Naive thymus-derived CD4-positive, alpha-beta T cell (primary cell): ENCODE measurements at regions of chr19 and their contacts with region 1.

Region 1: GRCh38 chr19:20039203-20039723 is at the start of gene ZNF682:
- DNase-seq: peak; percentile 83 to 96 (median 94)
- ATAC-seq: peak; percentile 100
- H3K4me3 ChIP-seq: peak within 1 kb of the TSS; percentile 90
- H3K4me3 Mint-ChIP-seq: peak within 1 kb of the TSS; percentile 92 to 99 (median 96)
- H3K27ac ChIP-seq: peak within 1 kb of the TSS; percentile 81
- H3K27ac Mint-ChIP-seq: peak within 1 kb of the TSS; percentile 86 to 98 (median 94)
- H3K4me1 ChIP-seq: no peaks in the 10 kb centered on the region
- H3K4me1 Mint-ChIP-seq: peaks cover 5 to 27% (median 25%) of the 10 kb centered on the region in 7 donors
- H3K27me3 ChIP-seq: no peaks in the 10 kb centered on the region
- H3K27me3 Mint-ChIP-seq: peaks cover 0 to 5% (median 0%) of the 10 kb centered on the region in 5 donors
- total RNA-seq, gene ZNF682: 5.3 to 13.0 (median 9.5) TPM

Region 2: DNA sequence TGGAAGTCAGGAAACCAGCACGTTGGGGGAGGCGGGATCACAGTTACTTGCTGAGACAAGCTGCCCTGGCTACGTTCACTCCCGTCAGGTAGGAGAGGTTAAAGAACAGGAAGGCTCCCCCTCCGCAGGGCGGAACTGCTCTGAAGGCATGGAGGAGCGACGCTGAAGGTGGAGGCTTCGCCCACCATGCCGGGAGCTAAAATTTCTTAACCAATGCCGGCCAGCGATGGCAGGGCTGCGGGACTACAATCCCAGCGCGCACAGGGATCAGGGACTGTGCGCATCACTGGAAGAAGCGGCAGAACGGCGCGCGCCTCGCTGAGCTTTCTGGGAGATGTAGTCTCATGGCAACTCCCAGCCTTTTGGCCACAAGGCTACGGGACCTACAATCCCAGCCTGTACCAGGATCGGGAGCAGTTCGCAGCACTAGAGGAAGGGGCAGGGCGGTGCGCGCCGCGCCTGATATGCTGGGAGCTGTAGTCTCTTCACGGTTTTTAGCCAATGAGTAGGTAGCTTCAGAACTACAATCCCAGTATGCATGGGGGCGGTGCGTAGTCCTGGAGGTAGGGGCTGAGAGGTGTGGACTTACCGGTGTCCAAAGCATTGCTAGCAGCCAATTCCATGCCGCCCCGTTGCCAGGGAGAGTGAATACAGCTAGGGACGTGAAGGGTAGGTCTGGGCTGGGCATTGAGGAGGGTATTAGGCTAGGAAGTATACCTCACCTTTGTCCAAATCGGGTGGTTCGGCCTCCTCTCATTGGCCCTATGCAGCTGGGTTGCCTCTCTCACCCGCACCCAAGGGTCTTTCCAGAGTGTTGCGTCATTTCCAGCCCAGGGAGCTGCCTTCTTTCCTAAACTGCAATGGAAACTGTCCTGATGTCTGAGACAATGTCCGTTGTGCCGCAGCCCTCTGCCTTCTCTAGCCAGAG is 12.8 kb after region 1 on chr19:
- CTCF ChIA-PET with region 1: no interaction called
- POLR2A ChIA-PET with region 1: interaction called, 32 read pairs
- intact Hi-C with region 1: loop called (anchors 1 to 2 kb)
- DNase-seq: peak; percentile 17 to 50 (median 44)
- ATAC-seq: peak; percentile 93
- H3K4me3 ChIP-seq: peak overlapping the region; percentile 98
- H3K4me3 Mint-ChIP-seq: peak overlapping the region; percentile 95 to 100 (median 98)
- H3K27ac ChIP-seq: peak overlapping the region; percentile 77
- H3K27ac Mint-ChIP-seq: peak overlapping the region; percentile 83 to 97 (median 94)
- H3K4me1 ChIP-seq: peaks cover 8% of the 10 kb centered on the region in 2 donors
- H3K4me1 Mint-ChIP-seq: peaks cover 0 to 17% (median 8%) of the 10 kb centered on the region in 7 donors
- H3K27me3 ChIP-seq: no peaks in the 10 kb centered on the region
- H3K27me3 Mint-ChIP-seq: peaks cover 0 to 4% (median 0%) of the 10 kb centered on the region in 5 donors

Region 3: GRCh38 chr19:20077791-20078463 is 38.7 kb after region 1 on chr19 and contains the start of gene ZNF90:
- CTCF ChIA-PET with region 1: no interaction called
- POLR2A ChIA-PET with region 1: interaction called, 10 read pairs
- intact Hi-C with region 1: loop called in 1 of 2 experiments (anchors 1 kb)
- DNase-seq: peak; percentile 57 to 90 (median 84)
- ATAC-seq: peak; percentile 99
- H3K4me3 ChIP-seq: peak within 1 kb of the TSS; percentile 86
- H3K4me3 Mint-ChIP-seq: peak within 1 kb of the TSS; percentile 86 to 89 (median 88)
- H3K27ac ChIP-seq: no peak within 1 kb of the TSS
- H3K27ac Mint-ChIP-seq: peak within 1 kb of the TSS; percentile 31 to 82 (median 54)
- H3K4me1 ChIP-seq: peaks cover 4 to 8% of the 10 kb centered on the region in 2 donors
- H3K4me1 Mint-ChIP-seq: peaks cover 0 to 27% (median 14%) of the 10 kb centered on the region in 7 donors
- H3K27me3 ChIP-seq: no peaks in the 10 kb centered on the region
- H3K27me3 Mint-ChIP-seq: no peaks in the 10 kb centered on the region
- total RNA-seq, gene ZNF90: 3.4 to 7.7 (median 4.5) TPM

Region 4: GRCh38 chr19:20237761-20238623 is 198.7 kb after region 1 on chr19:
- CTCF ChIA-PET with region 1: no interaction called
- POLR2A ChIA-PET with region 1: no interaction called
- intact Hi-C with region 1: loop called in 1 of 2 experiments (anchors 2 kb)
- DNase-seq: peak; percentile 70 to 90 (median 83)
- ATAC-seq: peak; percentile 97
- H3K4me3 ChIP-seq: peak overlapping the region; percentile 71
- H3K4me3 Mint-ChIP-seq: peak overlapping the region; percentile 83 to 98 (median 96)
- H3K27ac ChIP-seq: peak overlapping the region; percentile 63
- H3K27ac Mint-ChIP-seq: peak overlapping the region; percentile 55 to 95 (median 87)
- H3K4me1 ChIP-seq: peaks cover 0 to 4% of the 10 kb centered on the region in 2 donors
- H3K4me1 Mint-ChIP-seq: peaks cover 5 to 12% (median 10%) of the 10 kb centered on the region in 7 donors
- H3K27me3 ChIP-seq: no peaks in the 10 kb centered on the region
- H3K27me3 Mint-ChIP-seq: no peaks in the 10 kb centered on the region

Region 5: DNA sequence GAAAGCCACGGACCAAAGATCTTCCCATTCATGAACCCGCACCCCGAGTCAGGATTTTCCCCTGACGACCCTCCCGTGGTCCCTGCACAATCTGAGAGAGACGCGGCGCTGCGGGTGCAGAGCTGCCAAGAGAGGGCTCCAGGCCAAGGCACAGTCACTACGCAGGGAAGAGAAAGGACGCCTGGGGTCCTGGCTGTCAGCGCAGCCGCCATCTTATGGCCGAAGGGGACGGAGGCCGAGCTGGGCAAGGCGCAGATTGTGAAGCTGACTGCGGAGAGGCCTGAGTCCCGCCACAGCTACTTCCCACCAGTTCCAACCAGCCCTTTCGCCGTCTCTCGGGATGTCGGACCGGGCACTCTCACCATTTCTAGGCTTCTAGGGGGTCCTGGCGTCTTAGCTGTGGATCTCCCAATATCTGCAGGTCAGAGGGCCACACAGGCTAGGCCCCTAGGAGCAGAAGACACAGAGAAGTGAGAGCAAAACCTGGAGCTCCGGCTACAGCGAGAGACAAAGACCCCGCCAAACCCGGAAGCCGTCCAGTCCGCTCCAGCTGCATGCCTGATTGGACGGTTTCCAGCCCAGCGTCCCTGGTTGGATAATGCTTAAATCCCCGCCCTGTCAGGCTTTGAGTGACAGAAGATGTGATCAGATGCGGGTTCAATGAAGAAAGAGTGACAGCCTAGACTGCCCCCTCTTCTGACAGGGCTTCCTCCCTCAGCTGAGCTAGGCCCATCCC is 1728.0 kb after region 1 on chr19 and contains the start of gene ZNF100:
- CTCF ChIA-PET with region 1: no interaction called
- POLR2A ChIA-PET with region 1: no interaction called
- intact Hi-C with region 1: loop called in 1 of 2 experiments (anchors 2 kb)
- DNase-seq: peak; percentile 64 to 88 (median 80)
- ATAC-seq: peak; percentile 98
- H3K4me3 ChIP-seq: peak within 1 kb of the TSS; percentile 97
- H3K4me3 Mint-ChIP-seq: peak within 1 kb of the TSS; percentile 92 to 98 (median 97)
- H3K27ac ChIP-seq: peak within 1 kb of the TSS; percentile 81
- H3K27ac Mint-ChIP-seq: peak within 1 kb of the TSS; percentile 89 to 98 (median 92)
- H3K4me1 ChIP-seq: no peaks in the 10 kb centered on the region
- H3K4me1 Mint-ChIP-seq: peaks cover 7 to 43% (median 27%) of the 10 kb centered on the region in 7 donors
- H3K27me3 ChIP-seq: no peaks in the 10 kb centered on the region
- H3K27me3 Mint-ChIP-seq: no peaks in the 10 kb centered on the region
- total RNA-seq, gene ZNF100: 9.5 to 22.5 (median 18.4) TPM

Region 6: GRCh38 chr19:21851596-21852345 is 1812.5 kb after region 1 on chr19:
- CTCF ChIA-PET with region 1: no interaction called
- POLR2A ChIA-PET with region 1: interaction called, 3 read pairs
- intact Hi-C with region 1: loop called in 1 of 2 experiments (anchors 10 kb)
- DNase-seq: peak; percentile 71 to 90 (median 88)
- ATAC-seq: peak; percentile 99
- H3K4me3 ChIP-seq: peak overlapping the region; percentile 98
- H3K4me3 Mint-ChIP-seq: peak overlapping the region; percentile 89 to 96 (median 92)
- H3K27ac ChIP-seq: peak overlapping the region; percentile 90
- H3K27ac Mint-ChIP-seq: peak overlapping the region; percentile 68 to 96 (median 92)
- H3K4me1 ChIP-seq: peaks cover 6 to 10% of the 10 kb centered on the region in 2 donors
- H3K4me1 Mint-ChIP-seq: peaks cover 8 to 34% (median 27%) of the 10 kb centered on the region in 7 donors
- H3K27me3 ChIP-seq: no peaks in the 10 kb centered on the region
- H3K27me3 Mint-ChIP-seq: peaks cover 0 to 1% (median 0%) of the 10 kb centered on the region in 5 donors